Right ventricle myocardium inferior (tissue), 1 donor: ENCODE measurements at regions of chr5 and their contacts with region 1.

Region 1: DNA sequence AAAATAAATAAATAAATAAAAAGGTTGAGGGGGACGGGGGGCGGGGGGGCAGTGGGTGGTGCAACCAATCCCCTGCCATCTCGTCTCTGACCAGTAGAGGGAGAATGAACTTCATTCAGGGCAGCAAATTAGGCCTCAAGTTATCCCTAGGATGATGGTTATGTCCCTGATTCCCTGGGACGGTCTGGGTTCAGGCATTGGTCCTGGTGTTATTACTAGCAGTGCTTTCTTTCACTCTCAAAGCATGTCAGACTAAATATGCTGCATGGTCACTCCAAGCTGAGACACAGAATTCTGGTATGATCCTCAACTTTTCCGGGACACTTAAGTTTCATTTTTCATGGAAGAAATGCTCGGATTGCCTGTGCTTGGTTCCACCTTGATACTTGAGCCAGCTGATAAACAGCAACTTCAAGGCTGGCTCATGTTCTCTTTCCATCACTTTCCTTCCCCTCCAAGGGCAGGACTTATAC is 59.4 kb downstream of the DAP start:
- DNase-seq: no peak
- ATAC-seq: peak; percentile 53

Region 2: DNA sequence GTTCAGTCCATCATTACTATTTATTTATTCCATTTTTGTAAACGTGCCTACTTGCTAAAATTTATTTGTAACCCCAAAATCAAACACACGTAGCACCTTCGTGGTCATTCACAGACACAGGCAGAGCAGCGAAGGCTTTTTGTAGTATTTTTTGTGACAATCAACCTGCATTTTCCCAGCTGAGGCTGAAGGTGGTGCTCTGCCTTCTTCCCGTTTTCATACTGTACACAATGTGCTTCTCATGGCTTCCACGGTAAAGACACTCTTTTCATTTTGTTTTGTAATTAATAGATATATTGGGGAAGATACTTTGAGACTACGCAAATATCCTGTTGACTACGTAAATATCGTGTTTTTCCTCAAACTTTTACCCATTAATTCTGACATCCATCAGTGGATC is 40.1 kb after region 1 on chr5:
- intact Hi-C with region 1: loop called (anchors 5 kb)
- DNase-seq: no peak
- ATAC-seq: no peak

Region 3: GRCh38 chr5:10761166-10761932 is 59.7 kb after region 1 on chr5 and contains the start of gene DAP:
- intact Hi-C with region 1: loop called (anchors 5 kb)
- DNase-seq: peak; percentile 94
- ATAC-seq: peak; percentile 88
- total RNA-seq, gene DAP: 18.7 TPM

Region 4: DNA sequence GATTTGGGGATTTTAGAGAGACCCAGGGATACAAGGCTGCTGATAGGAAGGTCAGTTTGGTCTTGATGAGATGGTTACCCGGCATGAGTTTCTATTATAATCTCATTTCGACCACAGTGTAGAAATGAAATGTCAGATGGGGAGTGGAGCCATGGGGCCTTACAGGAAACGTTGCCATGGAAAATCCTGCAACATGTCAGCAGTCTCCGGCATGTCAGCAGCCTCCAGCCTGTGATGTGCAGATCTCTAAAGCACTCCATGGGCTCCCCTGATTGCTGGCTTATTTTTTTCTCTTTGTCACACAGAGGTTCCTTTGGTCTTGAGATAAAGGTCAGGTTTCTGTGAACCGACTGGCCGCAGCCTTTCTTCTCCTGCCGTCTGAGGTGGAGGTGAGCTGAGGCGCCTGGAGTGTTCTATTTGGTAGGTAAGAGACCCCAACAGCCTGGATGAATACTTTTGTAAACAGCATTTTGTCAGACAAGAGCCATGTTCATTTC is 268.1 kb after region 1 on chr5:
- intact Hi-C with region 1: no loop called
- DNase-seq: no peak
- ATAC-seq: no peak

Region 5: DNA sequence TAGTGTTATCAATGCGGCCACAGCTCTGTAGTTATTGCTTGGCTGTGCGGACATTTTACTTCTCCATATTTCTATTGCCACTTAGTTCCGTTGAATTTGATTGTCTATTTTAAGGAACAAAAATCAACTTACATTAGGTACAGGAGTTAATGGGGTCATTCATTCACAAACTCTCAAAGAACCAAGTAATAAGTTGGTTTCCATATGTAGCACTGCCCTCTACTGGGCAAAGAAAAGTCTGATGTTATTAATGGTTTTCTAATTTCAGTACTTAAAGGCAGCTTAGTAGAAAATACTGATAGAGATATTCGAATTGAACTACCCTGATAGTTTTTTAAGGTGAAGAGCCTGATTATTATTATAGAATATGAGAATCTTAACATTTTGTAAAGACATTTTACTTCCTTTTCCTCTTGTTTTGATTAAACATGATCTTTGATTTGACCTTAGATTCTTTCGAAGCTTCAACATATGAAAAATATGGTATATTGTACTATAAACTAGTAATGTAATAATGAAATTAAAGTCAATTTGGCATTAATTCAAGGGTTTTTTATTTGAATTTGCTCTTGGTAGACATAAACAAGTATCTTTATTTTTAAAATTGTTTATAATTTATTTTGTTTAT is 1322.1 kb after region 1 on chr5:
- intact Hi-C with region 1: loop called (anchors 5 kb)
- DNase-seq: no peak
- ATAC-seq: no peak